ENCODE measurements at regions of chr3 and their contacts with region 1.

Region 1: GRCh38 chr3:141538568-141539240 is 51.9 kb downstream of the RASA2 start:
- DNase-seq: no peak
- ATAC-seq: no peak
- H3K4me3 ChIP-seq: no peak overlapping the region
- H3K27ac ChIP-seq: peak overlapping the region in 1 of 10 donors; percentile 38
- H3K4me1 ChIP-seq: peaks cover 0 to 25% (median 0%) of the 10 kb centered on the region in 9 donors
- H3K27me3 ChIP-seq: no peaks in the 10 kb centered on the region
- CTCF ChIP-seq: no peak

Region 2: GRCh38 chr3:141499965-141500364 is 38.7 kb before region 1 on chr3:
- intact Hi-C with region 1: loop called in 1 of 10 experiments (anchors 5 kb)
- DNase-seq: no peak
- ATAC-seq: no peak
- H3K4me3 ChIP-seq: no peak overlapping the region
- H3K27ac ChIP-seq: peak overlapping the region in 1 of 10 donors; percentile 87
- H3K4me1 ChIP-seq: peaks cover 0 to 46% (median 12%) of the 10 kb centered on the region in 9 donors
- H3K27me3 ChIP-seq: no peaks in the 10 kb centered on the region
- CTCF ChIP-seq: no peak

Region 3: GRCh38 chr3:141669434-141669833 is 130.7 kb after region 1 on chr3:
- intact Hi-C with region 1: no loop called
- DNase-seq: no peak
- ATAC-seq: no peak
- H3K4me3 ChIP-seq: no peak overlapping the region
- H3K27ac ChIP-seq: no peak overlapping the region
- H3K4me1 ChIP-seq: no peaks in the 10 kb centered on the region
- H3K27me3 ChIP-seq: no peaks in the 10 kb centered on the region
- CTCF ChIP-seq: no peak

Region 4: DNA sequence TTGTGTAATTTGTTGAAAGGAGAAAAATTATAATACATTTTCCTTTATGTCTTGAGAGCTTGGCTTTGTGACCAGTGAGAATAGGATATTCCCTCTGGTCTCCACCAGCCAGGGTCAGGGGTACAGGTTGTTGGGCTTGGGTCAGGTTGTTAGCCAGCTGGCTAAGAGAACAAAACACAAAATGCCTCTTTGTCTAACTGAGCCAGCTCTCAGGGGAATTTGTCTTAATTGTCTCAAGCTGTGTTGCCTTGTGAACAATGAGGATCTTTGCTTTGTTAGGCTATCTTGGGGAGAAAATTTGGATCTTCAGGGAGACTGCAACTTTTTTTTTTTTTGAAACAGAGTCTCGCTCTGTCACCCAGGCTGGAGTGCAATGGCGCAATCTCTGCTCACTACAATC is 704.4 kb after region 1 on chr3:
- intact Hi-C with region 1: no loop called
- DNase-seq: no peak
- ATAC-seq: no peak
- H3K4me3 ChIP-seq: no peak overlapping the region
- H3K27ac ChIP-seq: no peak overlapping the region
- H3K4me1 ChIP-seq: no peaks in the 10 kb centered on the region
- H3K27me3 ChIP-seq: peaks cover 0 to 11% (median 0%) of the 10 kb centered on the region in 7 donors
- CTCF ChIP-seq: no peak